ENCODE measurements at regions of chr12 and their contacts with region 1.

Region 1: DNA sequence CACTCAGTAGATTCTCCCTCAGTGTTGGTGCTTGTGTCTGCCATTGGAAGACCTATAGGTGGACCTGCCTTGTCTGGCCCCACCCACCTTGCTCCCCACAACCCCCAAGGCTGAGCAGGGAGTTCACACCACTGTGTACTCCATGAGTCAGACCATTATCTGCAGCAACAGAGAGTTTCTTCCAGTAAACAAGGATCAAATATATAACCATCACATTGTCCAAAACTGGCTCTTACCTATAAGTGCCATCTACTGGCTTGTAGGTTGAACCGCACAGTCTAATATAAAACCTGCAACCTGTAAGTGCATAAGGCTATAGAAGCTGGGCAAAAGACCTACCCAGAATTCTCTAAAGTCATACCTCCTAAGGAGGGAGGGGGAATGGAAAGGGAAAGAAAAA is 7.9 kb downstream of the TAS2R13 start:
- DNase-seq: peak; percentile 34
- ATAC-seq: peak; percentile 76
- H3K4me3 ChIP-seq: no peak overlapping the region
- H3K27ac ChIP-seq: no peak overlapping the region
- H3K4me1 ChIP-seq: peaks cover 10% of the 10 kb centered on the region; the same call in 1 of the 2 replicates
- H3K27me3 ChIP-seq: no peaks in the 10 kb centered on the region
- CTCF ChIP-seq: peak; percentile 49
- EP300 ChIP-seq: no peak
- POLR2A ChIP-seq: no peak
- RAD21 ChIP-seq: no peak

Region 2: DNA sequence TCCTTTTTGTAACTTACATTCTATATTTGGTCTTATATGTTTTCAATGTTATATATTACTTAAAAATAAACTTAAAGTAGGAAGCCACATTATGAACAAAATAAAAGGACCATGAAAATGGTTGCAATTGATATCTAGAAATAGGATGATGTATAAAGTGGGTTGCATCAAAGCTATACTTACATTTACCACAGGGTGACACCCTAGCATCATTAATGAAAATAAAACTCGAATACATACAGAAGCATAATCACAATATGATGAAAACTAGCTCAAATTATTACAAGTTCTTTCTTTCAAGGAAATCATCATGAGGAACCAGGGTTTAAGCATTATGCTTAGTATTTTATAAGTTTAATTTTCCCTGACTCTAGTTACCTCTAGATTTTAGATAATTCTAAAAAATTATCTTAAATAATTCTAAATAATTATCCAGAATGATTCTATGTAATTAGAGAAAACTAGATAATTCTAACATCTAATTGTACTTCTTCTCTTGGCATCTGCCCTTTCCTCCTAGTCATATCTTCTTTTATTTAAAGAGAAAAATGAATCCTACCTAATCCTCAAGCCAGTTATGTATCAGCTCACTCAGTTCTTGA is 130.2 kb before region 1 on chr12:
- CTCF ChIA-PET with region 1: interaction called, 5 read pairs
- POLR2A ChIA-PET with region 1: no interaction called
- in situ Hi-C with region 1: no loop called
- intact Hi-C with region 1: loop called (anchors 2 kb)
- DNase-seq: peak; percentile 24
- ATAC-seq: no peak
- H3K4me3 ChIP-seq: no peak overlapping the region
- H3K27ac ChIP-seq: no peak overlapping the region
- H3K4me1 ChIP-seq: no peaks in the 10 kb centered on the region
- H3K27me3 ChIP-seq: peaks cover 0 to 6% of the 10 kb centered on the region in 2 experiments; a peak in 2 of 5 replicates
- CTCF ChIP-seq: peak; percentile 66
- EP300 ChIP-seq: no peak
- POLR2A ChIP-seq: no peak
- RAD21 ChIP-seq: peak; percentile 46; the same call in 1 of the 2 replicates

Region 3: GRCh38 chr12:10867381-10867780 is 34.0 kb before region 1 on chr12:
- CTCF ChIA-PET with region 1: interaction called, 13 read pairs
- POLR2A ChIA-PET with region 1: no interaction called
- in situ Hi-C with region 1: no loop called
- intact Hi-C with region 1: loop called (anchors 5 kb)
- DNase-seq: peak; percentile 23
- ATAC-seq: peak; percentile 76
- H3K4me3 ChIP-seq: no peak overlapping the region
- H3K27ac ChIP-seq: no peak overlapping the region
- H3K4me1 ChIP-seq: peaks cover 14% of the 10 kb centered on the region; the same call in 1 of the 2 replicates
- H3K27me3 ChIP-seq: no peaks in the 10 kb centered on the region; a peak in 1 of 5 replicates
- CTCF ChIP-seq: peak; percentile 55
- EP300 ChIP-seq: no peak
- POLR2A ChIP-seq: no peak
- RAD21 ChIP-seq: no peak; the same call in 1 of the 2 replicates

Measured in HepG2 (cell line).